ENCODE measurements at regions of chr2 and their contacts with region 1.

Region 1: DNA sequence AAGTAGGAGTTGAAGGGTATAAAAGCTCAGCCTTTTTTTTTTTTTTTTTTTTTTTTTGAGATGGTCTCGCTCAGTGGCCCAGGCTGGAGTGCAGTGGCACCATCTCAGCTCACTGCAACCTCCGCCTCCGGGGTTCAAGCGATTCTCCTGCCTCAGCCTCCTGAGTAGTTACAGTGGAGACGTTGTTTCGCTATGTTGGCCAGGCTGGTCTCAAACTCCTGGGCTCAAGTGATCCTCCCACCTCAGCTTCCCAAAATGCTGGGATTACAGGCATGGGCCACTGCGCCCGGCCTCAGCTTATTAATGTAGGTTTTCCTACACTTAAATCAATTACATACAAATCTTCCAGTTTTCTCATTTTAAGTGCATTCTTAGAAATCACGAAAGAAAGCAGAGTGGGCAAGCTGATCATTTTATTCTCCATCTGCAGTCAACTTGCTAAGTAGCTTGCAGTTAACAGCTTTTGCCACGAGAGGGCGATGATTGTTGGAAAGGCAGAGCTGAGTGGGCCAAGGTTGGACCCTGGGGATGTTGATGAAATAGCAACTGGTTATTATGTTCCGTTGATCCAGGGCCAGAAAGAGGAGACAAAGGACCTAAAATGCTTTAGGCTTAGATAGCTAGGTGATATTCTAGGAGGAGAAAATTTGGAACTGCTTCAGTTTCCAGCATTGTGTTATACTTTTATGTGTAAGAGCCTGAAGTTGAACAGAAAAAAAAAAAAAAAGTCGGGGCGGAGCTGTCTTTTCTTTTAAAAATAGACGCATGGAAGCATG is 234.4 kb upstream of the EPAS1 start:
- DNase-seq: peak; percentile 85
- ATAC-seq: peak; percentile 52
- H3K4me3 Mint-ChIP-seq: no peak overlapping the region
- H3K27ac Mint-ChIP-seq: no peak overlapping the region
- H3K4me1 Mint-ChIP-seq: peaks cover 17% of the 10 kb centered on the region
- H3K27me3 Mint-ChIP-seq: no peaks in the 10 kb centered on the region

Region 2: DNA sequence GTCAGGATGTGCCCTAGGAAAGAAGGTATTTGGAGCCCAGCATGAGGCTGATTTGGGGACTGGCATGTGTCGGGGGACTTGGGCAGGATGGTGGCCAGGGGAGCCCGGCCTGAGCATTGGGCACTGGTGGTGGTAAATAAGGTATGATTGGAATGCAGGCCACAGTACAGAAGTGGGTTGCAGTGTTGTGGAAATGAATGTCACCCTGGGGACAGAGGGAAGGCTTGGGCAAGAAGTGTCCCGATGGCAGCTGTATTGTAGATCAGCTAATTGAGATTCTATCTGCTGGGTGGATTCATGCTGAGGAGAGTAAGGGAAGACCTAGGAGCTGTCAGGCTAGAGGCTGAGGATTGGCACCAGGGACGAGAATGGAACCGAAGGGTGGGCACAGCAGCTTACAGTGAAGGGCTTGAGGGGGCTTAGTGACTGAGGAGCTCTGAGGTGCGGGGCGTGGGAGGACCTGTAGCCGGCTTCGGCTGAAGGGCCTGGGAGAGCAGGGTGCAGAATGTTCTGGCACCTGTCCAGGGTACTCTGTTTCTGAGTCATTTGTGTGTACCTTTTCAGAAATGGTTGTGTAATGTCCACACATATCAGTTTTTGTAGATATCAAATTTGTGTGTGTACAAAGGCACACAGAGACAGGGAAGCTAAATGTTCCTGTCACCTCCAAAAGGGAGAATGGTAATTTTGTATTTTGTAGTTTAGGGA is 241.1 kb before region 1 on chr2:
- CTCF ChIA-PET with region 1: no interaction called
- POLR2A ChIA-PET with region 1: no interaction called
- intact Hi-C with region 1: no loop called
- DNase-seq: no peak
- ATAC-seq: no peak
- H3K4me3 Mint-ChIP-seq: no peak overlapping the region
- H3K27ac Mint-ChIP-seq: no peak overlapping the region
- H3K4me1 Mint-ChIP-seq: peaks cover 13% of the 10 kb centered on the region
- H3K27me3 Mint-ChIP-seq: no peaks in the 10 kb centered on the region

Region 3: DNA sequence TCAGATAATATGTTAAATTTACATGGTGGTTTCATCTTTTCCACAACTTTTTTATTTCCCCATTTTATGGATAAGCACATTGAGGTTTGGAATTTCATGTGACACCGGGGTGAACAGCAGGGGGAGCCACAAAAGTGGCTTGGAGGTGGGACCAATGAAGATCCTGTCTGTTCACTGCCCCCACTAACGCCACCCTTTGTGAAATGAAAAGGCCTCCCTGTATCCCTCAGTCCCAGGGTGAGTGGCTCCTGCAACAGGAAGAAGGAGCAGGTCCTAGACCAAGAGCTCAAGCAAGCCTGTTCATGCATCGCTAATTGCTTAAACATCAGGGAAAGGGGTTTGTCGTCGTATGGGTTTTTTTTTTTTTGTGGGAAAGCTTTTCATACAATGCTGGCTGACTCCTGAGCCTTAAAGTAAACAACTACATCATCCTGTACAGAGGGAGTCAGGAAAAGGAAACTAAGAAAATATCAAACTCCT is 33.5 kb before region 1 on chr2:
- CTCF ChIA-PET with region 1: interaction called, 12 read pairs
- POLR2A ChIA-PET with region 1: no interaction called
- intact Hi-C with region 1: loop called in 1 of 2 experiments (anchors 5 kb)
- DNase-seq: no peak
- ATAC-seq: no peak
- H3K4me3 Mint-ChIP-seq: no peak overlapping the region
- H3K27ac Mint-ChIP-seq: no peak overlapping the region
- H3K4me1 Mint-ChIP-seq: peaks cover 24% of the 10 kb centered on the region
- H3K27me3 Mint-ChIP-seq: no peaks in the 10 kb centered on the region

Region 4: GRCh38 chr2:46050489-46050888 is 12.3 kb before region 1 on chr2:
- CTCF ChIA-PET with region 1: interaction called, 12 read pairs
- POLR2A ChIA-PET with region 1: no interaction called
- intact Hi-C with region 1: no loop called
- DNase-seq: no peak
- ATAC-seq: no peak
- H3K4me3 Mint-ChIP-seq: no peak overlapping the region
- H3K27ac Mint-ChIP-seq: no peak overlapping the region
- H3K4me1 Mint-ChIP-seq: peaks cover 16% of the 10 kb centered on the region
- H3K27me3 Mint-ChIP-seq: no peaks in the 10 kb centered on the region